Activated T-helper 2 cell treated with anti-CD3 and anti-CD28 coated beads, Interferon-gamma antibody, Interleukin-2, Interleukin-4, amounts not matched to agents 10 μg/mL and 5 μg/mL and 100 μg/mL, durations not matched to agents 14 hours and 24 hours and 36 hours (primary cell): ENCODE measurements at regions of chr12 and their contacts with region 1.

Region 1: DNA sequence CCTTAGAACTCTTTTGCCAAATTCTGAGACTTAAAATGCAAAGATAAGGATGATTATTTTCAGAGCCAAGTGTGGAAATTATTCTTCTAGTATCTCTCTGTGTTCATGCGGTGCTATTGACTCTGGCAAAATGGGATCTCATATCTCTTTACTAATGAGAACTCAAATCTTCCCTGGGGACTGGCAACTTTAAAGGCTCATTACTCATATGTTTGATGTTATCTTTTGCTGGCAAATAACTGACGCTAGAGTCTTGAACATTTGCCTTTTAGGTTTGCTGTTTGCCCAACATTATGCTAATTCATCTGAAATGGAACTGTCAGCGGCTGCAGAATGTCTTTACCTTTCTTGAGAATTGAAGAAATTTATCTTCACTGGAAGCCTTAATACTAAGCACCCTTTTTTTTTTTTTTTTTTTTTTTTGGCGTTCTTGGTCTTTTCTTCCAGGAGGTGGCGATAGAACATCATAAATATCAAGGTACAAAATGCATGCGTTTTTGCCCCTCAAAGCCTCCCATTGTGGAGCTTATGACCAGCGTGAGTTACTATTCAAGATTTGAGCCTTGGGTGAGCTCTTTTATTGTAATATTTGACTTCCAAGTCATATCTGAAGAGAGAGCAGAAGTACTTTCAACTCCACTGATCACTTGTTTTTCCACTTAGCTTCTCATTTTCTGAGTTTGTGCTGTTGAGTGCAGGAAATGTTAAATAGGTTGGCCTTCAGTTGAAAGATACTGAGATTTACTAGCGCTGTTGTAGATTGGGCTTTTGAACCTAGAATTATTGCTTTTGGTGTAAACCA is 86.6 kb downstream of the CAND1 start:
- DNase-seq: no peak
- H3K4me3 Mint-ChIP-seq: no peak overlapping the region
- H3K27ac Mint-ChIP-seq: no peak overlapping the region
- H3K4me1 Mint-ChIP-seq: peaks cover 24% of the 10 kb centered on the region
- H3K27me3 Mint-ChIP-seq: peaks cover 6% of the 10 kb centered on the region

Region 2: DNA sequence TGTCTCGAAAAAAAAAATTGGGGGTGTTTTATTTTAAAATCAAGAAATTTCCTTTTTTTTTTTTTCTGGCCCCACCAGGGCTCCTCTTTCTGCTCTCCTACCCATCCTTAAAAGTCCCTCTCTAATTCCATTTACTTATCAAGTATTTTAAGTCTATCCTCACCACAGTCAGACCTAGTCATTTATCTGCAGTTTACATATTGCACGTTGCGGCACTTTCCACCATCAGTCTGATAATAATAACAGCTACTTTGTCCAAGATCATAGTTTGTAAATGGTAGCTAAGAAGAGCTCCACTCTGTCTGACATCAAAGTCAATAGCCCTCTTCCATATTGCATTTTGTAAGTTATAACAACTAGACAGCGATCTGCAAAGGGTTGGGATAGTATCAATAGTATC is 110.2 kb before region 1 on chr12:
- intact Hi-C with region 1: no loop called
- DNase-seq: no peak
- H3K4me3 Mint-ChIP-seq: no peak overlapping the region
- H3K27ac Mint-ChIP-seq: no peak overlapping the region
- H3K4me1 Mint-ChIP-seq: no peaks in the 10 kb centered on the region
- H3K27me3 Mint-ChIP-seq: peaks cover 12% of the 10 kb centered on the region

Region 3: DNA sequence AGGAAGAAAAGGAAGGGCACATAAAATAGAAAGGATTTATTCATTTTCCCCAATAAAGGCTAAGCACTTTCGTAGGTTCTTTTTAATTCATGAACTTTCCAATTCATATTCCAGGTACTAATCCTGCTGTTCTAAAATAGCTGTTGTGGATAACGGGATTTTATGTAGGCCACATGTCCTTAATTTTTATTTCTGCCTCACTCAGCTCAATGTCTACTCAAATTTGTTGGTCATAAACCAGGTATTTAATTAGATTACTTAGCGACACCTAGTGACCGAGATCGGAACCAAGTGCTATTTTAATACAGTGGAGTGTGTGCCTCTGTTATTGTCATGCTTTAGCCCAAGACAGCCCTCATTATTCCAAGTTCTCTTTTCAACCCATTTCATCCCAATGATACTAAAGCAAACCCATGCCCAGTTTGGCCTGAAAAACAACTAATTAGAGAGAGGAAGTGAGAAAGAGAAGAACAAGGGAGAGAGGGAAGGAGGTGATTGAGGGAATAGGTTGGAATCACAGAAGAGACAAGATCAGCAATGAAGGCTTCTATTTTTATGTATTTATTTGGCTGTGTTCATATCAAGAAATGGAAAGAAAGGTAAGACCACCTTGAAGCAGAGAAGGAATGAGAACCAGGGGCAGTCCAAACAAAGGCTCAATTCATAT is 587.6 kb after region 1 on chr12:
- intact Hi-C with region 1: loop called (anchors 1 kb)
- DNase-seq: peak; percentile 18
- H3K4me3 Mint-ChIP-seq: no peak overlapping the region
- H3K27ac Mint-ChIP-seq: no peak overlapping the region
- H3K4me1 Mint-ChIP-seq: peaks cover 1% of the 10 kb centered on the region
- H3K27me3 Mint-ChIP-seq: peaks cover 16% of the 10 kb centered on the region